ENCODE measurements at regions of chr14 and their contacts with region 1.

Region 1: GRCh38 chr14:68862954-68863594 is 70.2 kb upstream of the ZFP36L1 start:
- DNase-seq: peak; percentile 84
- ATAC-seq: peak; percentile 67
- H3K4me3 Mint-ChIP-seq: no peak overlapping the region
- H3K27ac Mint-ChIP-seq: no peak overlapping the region
- H3K4me1 Mint-ChIP-seq: peaks cover 2% of the 10 kb centered on the region
- H3K27me3 Mint-ChIP-seq: no peaks in the 10 kb centered on the region

Region 2: GRCh38 chr14:68663385-68664076 is 199.5 kb before region 1 on chr14:
- CTCF ChIA-PET with region 1: no interaction called
- POLR2A ChIA-PET with region 1: no interaction called
- DNase-seq: peak; percentile 30
- ATAC-seq: peak; percentile 70
- H3K4me3 Mint-ChIP-seq: peak overlapping the region; percentile 57
- H3K27ac Mint-ChIP-seq: peak overlapping the region; percentile 69
- H3K4me1 Mint-ChIP-seq: peaks cover 23% of the 10 kb centered on the region
- H3K27me3 Mint-ChIP-seq: no peaks in the 10 kb centered on the region

Region 3: DNA sequence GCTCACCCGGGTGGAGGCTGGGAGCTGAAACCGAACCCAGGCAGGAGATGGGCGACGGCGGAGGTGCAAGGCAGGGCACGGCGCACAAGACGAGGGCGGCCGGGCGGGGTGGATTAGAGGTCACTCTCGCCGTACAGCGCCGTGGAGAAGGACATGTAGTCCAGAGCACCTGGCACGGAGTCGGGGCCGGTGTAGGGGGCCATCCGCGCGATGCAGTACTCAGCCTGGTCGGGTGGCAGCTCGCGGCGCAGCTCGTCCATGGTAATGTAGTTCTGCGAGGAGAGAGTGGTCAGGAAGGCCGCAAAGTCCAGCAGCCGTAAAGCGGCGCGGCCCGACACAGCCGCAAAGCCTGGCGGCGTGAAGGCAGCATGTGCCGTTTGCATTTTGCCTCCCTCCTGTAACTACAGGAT is 11.7 kb after region 1 on chr14:
- CTCF ChIA-PET with region 1: interaction called, 13 read pairs
- POLR2A ChIA-PET with region 1: no interaction called
- DNase-seq: no peak
- ATAC-seq: no peak
- H3K4me3 Mint-ChIP-seq: no peak overlapping the region
- H3K27ac Mint-ChIP-seq: no peak overlapping the region
- H3K4me1 Mint-ChIP-seq: no peaks in the 10 kb centered on the region
- H3K27me3 Mint-ChIP-seq: no peaks in the 10 kb centered on the region

Region 4: DNA sequence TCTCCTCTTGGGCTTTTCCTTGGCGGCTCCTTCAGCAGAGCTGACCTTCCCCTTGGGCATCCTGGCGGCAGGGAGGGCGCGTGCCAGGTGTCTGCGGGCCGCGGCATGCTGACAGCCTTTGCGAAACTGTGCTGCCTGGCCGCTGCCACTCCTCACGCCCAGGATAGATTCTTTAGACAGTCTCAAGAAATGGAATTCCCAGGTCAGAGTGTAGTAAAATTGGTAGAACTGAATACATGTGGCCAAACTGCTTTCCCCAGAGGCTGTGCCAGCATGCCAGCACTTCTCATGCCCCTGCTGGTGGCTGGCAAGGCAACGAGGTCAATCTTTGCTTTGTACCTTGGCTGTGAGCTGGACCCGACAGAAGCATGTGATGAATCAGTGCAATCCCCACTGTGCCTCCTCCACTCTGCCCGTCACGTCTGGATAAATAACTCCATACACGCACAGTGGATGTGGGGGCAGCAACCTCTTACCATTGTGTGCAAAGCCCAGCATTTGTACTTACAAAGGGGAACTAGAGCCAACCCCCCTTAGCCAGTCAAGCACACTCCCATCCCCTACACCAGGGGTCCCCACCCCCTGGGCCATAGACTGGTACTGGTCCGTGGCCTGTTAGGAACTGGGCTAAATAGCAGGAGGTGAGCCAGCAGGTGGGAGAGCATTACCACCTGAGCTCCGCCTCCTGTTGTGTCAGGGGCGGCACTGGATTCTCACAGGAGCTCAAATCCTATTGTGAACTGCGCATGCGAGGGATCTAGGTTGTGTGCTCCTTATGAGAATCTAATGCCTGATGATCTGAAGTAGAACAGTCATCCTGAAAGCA is 25.2 kb after region 1 on chr14:
- CTCF ChIA-PET with region 1: no interaction called
- POLR2A ChIA-PET with region 1: no interaction called
- DNase-seq: no peak
- ATAC-seq: no peak
- H3K4me3 Mint-ChIP-seq: no peak overlapping the region
- H3K27ac Mint-ChIP-seq: no peak overlapping the region
- H3K4me1 Mint-ChIP-seq: no peaks in the 10 kb centered on the region
- H3K27me3 Mint-ChIP-seq: no peaks in the 10 kb centered on the region

Region 5: GRCh38 chr14:69090187-69090789 is 227.2 kb after region 1 on chr14:
- CTCF ChIA-PET with region 1: interaction called, 18 read pairs
- POLR2A ChIA-PET with region 1: no interaction called
- DNase-seq: peak; percentile 51
- ATAC-seq: peak; percentile 47
- H3K4me3 Mint-ChIP-seq: no peak overlapping the region
- H3K27ac Mint-ChIP-seq: no peak overlapping the region
- H3K4me1 Mint-ChIP-seq: peaks cover 12% of the 10 kb centered on the region
- H3K27me3 Mint-ChIP-seq: no peaks in the 10 kb centered on the region

Region 6: DNA sequence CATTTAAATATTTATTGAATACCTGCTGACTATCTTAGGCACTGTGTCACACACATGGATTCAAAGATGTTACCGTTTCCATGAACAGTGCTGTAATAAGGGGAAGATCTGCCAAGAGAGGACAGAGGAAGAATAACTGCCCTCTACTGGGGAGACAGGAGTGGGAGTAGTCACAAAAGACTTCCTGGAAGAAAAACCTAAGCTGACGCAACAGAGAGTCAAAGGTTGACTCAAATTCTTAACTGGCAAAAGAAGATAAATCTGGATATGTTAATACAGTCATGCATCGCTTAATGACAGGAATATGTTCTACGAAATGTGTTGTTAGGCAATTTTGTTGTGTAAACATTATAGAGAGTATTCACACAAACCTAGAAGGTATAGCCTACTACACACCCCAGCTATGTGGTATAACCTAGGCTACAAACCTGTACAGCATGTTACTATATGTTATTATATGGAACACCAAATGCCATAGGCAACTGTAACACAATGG is 238.3 kb after region 1 on chr14:
- CTCF ChIA-PET with region 1: interaction called, 81 read pairs
- POLR2A ChIA-PET with region 1: no interaction called
- DNase-seq: peak; percentile 28
- ATAC-seq: peak; percentile 68
- H3K4me3 Mint-ChIP-seq: no peak overlapping the region
- H3K27ac Mint-ChIP-seq: peak overlapping the region; percentile 13
- H3K4me1 Mint-ChIP-seq: peaks cover 5% of the 10 kb centered on the region
- H3K27me3 Mint-ChIP-seq: no peaks in the 10 kb centered on the region

Region 7: DNA sequence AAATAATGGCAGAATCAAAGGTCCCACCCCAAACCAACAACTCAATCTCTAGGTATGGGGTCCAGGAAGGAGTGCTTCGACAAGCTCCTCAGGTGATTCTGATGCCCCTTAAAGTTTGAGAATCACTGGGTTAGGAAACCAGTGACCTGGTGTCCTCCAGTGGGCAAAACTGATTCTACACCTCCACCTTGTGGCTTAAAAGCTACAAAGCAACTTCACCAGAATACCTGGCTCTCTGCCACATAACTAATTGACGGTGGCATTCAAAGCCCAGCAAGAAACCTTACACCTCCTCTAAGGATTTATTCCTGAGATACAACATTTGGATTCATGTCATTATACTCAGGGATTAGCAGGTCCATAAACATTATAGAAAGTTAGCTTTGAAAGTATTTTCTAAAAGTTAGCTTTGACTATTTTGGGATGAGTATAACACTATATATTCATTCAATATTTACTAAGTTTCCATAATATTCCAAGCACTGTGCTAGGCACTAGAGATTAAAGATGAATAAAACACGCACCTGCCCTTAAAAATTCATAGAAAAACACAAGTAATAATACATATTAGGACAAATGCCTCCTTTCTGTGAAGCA is 244.4 kb after region 1 on chr14:
- CTCF ChIA-PET with region 1: interaction called, 81 read pairs
- POLR2A ChIA-PET with region 1: no interaction called
- DNase-seq: peak; percentile 58
- ATAC-seq: peak; percentile 68
- H3K4me3 Mint-ChIP-seq: no peak overlapping the region
- H3K27ac Mint-ChIP-seq: no peak overlapping the region
- H3K4me1 Mint-ChIP-seq: peaks cover 4% of the 10 kb centered on the region
- H3K27me3 Mint-ChIP-seq: no peaks in the 10 kb centered on the region

Measured in activated CD8-positive, alpha-beta T cell treated with anti-CD3 and anti-CD28 coated beads, Interleukin-2, amount 10 ng/mL, durations not matched to agents 7 days and 5 days (primary cell).